ENCODE measurements at regions of chr22 and their contacts with region 1.

Region 1: DNA sequence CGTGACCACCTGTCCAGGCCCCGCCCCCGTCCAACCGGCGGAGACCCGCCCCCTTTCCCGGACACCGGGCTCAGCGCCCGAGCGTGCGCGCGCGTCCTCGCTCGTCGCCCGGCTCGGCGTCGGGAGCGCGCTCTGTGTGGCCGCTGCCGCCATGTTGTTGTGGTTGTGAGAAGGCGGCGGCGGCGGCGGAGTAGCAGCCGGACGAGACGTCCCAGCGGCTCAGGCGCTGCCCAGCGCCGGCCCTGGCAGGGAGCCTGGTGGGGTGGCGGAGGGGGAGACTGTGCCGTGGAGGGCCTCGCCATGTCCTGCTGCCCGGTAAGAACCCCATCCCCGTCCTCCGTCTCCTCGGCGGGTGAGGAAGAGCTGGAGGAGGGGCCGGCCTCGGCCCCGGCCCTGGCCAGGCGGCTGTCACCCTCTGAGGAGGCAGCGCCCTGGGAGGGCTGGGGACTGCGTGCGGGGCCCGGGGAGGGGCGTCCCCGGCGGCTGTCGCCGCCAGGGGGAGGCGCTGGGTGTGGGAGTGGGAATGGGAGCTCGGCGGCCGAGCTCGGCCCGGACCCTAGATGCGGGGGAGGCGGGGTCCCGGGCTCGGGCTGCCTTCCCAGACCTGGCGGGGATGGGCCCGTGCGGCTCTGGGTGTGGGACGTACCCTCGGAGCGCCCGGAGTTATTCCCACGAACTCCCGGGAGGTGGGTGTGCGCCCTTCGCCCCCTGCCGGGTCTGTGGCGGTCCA is at the start of gene MTMR3:
- DNase-seq: peak; percentile 76 to 96
- H3K4me3 ChIP-seq: peak within 1 kb of the TSS; percentile 79 to 82
- H3K27ac ChIP-seq: peak within 1 kb of the TSS; percentile 89 to 93
- H3K4me1 ChIP-seq: peaks cover 0 to 7% of the 10 kb centered on the region in 2 donors
- H3K27me3 ChIP-seq: no peaks in the 10 kb centered on the region
- CTCF ChIP-seq: peak; percentile 47 to 64 (median 61)
- total RNA-seq, gene MTMR3: 26.1 TPM

Region 2: DNA sequence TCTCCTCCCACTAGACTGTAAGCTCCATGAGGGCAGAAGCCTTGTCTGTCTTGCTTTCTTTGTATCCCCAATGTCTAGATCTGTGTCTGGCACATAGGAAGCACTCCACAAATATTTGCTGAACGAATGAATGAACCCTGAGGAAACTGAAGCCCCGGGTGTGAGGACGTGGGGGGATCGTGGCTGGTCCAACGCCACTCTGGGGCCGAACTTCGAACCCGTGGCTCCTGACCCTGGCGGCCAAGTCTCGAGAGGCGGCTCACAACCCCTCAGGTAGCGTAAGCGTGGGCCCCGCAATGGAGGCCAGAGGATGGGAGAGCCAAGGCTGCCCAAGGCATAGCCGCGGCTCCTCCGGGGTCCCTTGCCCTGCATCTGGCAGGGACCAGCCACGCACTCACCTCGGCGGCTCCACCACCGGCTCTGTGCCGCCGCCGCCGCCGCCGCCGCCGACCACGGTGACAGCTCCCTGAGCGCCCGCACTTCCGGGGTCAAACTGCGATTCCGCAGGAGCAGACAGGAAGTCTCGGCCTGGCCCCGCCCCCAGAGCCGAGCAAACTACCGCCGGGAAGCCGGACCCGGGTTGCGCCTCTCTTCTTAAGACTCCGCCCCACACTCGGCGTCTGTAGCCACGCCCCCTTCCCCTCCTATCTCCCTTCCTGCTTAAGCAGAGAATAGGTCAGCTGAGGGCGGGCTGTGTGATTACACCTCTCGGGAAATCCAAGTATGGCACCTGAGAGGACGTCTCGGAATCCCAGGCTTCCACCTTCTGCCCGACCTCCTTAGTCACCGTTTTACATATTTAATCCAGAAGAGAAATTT is 45.2 kb before region 1 on chr22 and contains the start of gene ASCC2:
- intact Hi-C with region 1: loop called (anchors 1 kb)
- DNase-seq: peak; percentile 95 to 100
- H3K4me3 ChIP-seq: peak within 1 kb of the TSS; percentile 69 to 71
- H3K27ac ChIP-seq: peak within 1 kb of the TSS; percentile 68 to 83
- H3K4me1 ChIP-seq: peaks cover 5 to 13% of the 10 kb centered on the region in 2 donors
- H3K27me3 ChIP-seq: no peaks in the 10 kb centered on the region
- CTCF ChIP-seq: peak in 1 of 3 experiments; percentile 8
- total RNA-seq, gene ASCC2: 24.9 TPM

Region 3: DNA sequence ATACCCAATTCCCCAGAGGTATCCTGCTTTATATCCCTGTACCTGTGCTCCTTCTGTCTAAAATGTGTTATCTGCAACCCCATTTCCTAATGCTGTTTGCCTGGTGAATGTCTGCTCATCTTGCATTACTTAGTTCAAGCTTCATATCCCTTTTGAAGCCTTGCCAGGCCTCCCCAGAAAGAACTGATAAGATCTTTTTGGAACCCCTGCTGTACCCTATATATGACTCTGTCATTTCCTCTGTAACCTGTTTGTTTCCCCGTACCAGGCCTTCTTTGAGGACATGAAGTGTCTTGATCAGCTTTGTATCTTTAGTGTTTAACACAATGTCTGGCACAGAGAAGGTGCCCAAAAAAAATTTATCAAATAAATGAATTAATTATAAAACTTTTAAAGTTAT is 285.8 kb after region 1 on chr22:
- intact Hi-C with region 1: no loop called
- DNase-seq: no peak
- H3K4me3 ChIP-seq: no peak overlapping the region
- H3K27ac ChIP-seq: no peak overlapping the region
- H3K4me1 ChIP-seq: no peaks in the 10 kb centered on the region
- H3K27me3 ChIP-seq: no peaks in the 10 kb centered on the region
- CTCF ChIP-seq: no peak

Region 4: GRCh38 chr22:30289134-30289979 is 406.1 kb after region 1 on chr22 and contains the start of gene CASTOR1:
- intact Hi-C with region 1: no loop called
- DNase-seq: peak; percentile 96 to 99
- H3K4me3 ChIP-seq: peak within 1 kb of the TSS; percentile 74 to 94
- H3K27ac ChIP-seq: peak within 1 kb of the TSS; percentile 94 to 96
- H3K4me1 ChIP-seq: peaks cover 19 to 33% of the 10 kb centered on the region in 2 donors
- H3K27me3 ChIP-seq: no peaks in the 10 kb centered on the region
- CTCF ChIP-seq: no peak
- total RNA-seq, gene CASTOR1: 55.9 TPM

Measured in ascending aorta (tissue), 2 donors.